Activated T-helper 1 cell treated with anti-CD3 and anti-CD28 coated beads, Interleukin-12 subunit alpha, Interleukin-12 subunit beta, Interleukin-2, Interleukin-4 antibody, amounts not matched to agents 30 ng/mL and 10 ng/mL and 1 ng/mL, durations not matched to agents 14 hours and 24 hours and 36 hours (primary cell): ENCODE measurements at regions of chr3 and their contacts with region 1.

Region 1: DNA sequence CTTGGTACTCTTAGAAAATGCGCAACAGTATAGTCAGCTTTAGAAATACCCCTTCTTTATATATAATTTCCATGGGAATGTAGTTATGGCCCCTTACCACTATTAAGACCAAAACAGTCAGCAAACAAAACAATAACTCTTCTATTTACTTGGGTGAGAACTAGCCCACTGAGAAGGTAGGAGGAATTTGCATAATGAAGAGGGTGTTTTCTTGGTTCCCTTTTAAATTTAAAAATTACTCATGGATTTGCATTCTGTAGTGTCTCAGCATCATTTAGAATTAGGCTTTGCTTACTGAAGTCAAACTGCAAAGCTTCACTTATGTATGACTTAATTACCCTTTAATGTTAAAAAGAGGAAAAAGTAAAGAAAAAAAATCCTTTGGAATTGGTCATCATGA is 350.8 kb downstream of the PTPRG start:
- DNase-seq: no peak
- H3K4me3 Mint-ChIP-seq: no peak overlapping the region
- H3K27ac Mint-ChIP-seq: no peak overlapping the region
- H3K4me1 Mint-ChIP-seq: no peaks in the 10 kb centered on the region
- H3K27me3 Mint-ChIP-seq: no peaks in the 10 kb centered on the region

Region 2: GRCh38 chr3:61645148-61645547 is 267.0 kb before region 1 on chr3:
- intact Hi-C with region 1: loop called (anchors 10 kb)
- DNase-seq: no peak
- H3K4me3 Mint-ChIP-seq: no peak overlapping the region
- H3K27ac Mint-ChIP-seq: no peak overlapping the region
- H3K4me1 Mint-ChIP-seq: no peaks in the 10 kb centered on the region
- H3K27me3 Mint-ChIP-seq: no peaks in the 10 kb centered on the region